ENCODE measurements at regions of chr6 and their contacts with region 1.

Region 1: GRCh38 chr6:16684896-16685554 is 76.2 kb downstream of the ATXN1 start:
- DNase-seq: peak; percentile 97
- H3K4me3 ChIP-seq: no peak overlapping the region
- H3K27ac ChIP-seq: peak overlapping the region; percentile 91
- H3K4me1 ChIP-seq: peaks cover 63% of the 10 kb centered on the region
- H3K27me3 ChIP-seq: no peaks in the 10 kb centered on the region
- CTCF ChIP-seq: no peak

Region 2: GRCh38 chr6:16657768-16658167 is 27.3 kb before region 1 on chr6:
- CTCF ChIA-PET with region 1: no interaction called
- dilution Hi-C with region 1: no loop called
- in situ Hi-C with region 1: no loop called
- intact Hi-C with region 1: no loop called
- DNase-seq: no peak
- H3K4me3 ChIP-seq: no peak overlapping the region
- H3K27ac ChIP-seq: no peak overlapping the region
- H3K4me1 ChIP-seq: peaks cover 4% of the 10 kb centered on the region
- H3K27me3 ChIP-seq: no peaks in the 10 kb centered on the region
- CTCF ChIP-seq: no peak

Region 3: DNA sequence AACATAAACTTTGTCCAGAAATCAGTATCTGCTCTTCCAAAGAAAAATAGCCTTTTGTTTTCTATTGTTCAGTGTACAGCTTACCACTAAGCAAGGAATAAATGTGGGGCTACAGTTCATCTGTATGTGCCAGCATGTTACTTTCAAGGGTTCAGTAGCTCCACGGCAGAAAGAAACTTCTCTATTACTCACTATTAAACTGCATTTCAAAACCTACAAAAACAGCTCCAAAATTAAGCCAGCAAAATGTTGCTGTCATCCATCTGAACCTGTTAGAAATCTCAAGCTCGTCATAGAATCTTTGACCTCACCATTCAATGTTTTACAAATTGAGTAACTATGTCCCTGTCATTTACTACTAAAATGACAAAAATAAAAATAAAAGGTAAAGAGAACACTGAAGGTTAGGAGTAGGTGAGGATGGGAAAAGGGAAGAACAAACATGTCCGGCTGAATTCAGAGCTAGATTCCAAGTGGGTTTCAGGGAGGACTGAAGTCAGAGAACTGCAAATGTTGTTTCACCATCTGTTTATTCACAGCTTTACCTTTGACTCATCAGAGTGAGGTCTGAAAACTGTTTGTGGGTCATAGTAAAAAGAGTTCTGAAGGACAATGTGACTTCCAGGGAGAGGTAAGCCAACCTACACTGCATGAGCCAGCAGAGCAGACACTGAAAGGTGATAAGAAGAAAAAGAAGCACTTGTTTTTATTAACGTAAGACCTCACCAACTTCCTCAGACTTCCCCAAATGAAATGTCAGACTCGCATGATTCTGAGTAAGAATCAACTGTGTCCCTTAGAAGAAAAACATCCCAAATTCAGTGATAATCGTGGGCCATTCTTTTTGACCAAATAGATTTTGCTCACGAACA is 14.2 kb after region 1 on chr6:
- CTCF ChIA-PET with region 1: interaction called, 8 read pairs
- dilution Hi-C with region 1: no loop called
- in situ Hi-C with region 1: no loop called
- intact Hi-C with region 1: loop called (anchors 1 kb)
- DNase-seq: peak; percentile 74
- H3K4me3 ChIP-seq: no peak overlapping the region
- H3K27ac ChIP-seq: peak overlapping the region; percentile 80
- H3K4me1 ChIP-seq: peaks cover 46% of the 10 kb centered on the region
- H3K27me3 ChIP-seq: no peaks in the 10 kb centered on the region
- CTCF ChIP-seq: no peak

Region 4: DNA sequence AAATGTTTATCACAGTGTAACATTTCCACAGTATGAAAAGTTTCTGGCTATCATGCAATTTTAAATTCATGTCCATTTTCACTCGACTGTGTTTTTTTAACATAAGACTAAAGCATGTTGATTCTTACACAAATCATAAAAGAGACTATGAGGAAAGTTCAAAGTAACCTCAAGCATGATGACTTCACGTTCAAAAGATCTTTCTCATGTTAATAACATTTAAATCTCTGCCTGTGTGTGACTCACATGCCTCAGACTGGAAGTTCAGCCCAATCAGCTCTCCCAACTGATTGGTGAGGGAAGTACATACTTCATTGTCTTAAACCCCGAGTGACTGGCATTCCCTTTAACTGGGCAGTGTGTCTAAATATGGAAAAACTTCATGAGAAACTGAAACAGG is 38.8 kb after region 1 on chr6:
- CTCF ChIA-PET with region 1: no interaction called
- dilution Hi-C with region 1: no loop called
- in situ Hi-C with region 1: no loop called
- intact Hi-C with region 1: loop called (anchors 2 kb)
- DNase-seq: peak; percentile 92
- H3K4me3 ChIP-seq: no peak overlapping the region
- H3K27ac ChIP-seq: peak overlapping the region; percentile 85
- H3K4me1 ChIP-seq: peaks cover 61% of the 10 kb centered on the region
- H3K27me3 ChIP-seq: no peaks in the 10 kb centered on the region
- CTCF ChIP-seq: no peak